ENCODE measurements at regions of chr1 and their contacts with region 1.

Region 1: DNA sequence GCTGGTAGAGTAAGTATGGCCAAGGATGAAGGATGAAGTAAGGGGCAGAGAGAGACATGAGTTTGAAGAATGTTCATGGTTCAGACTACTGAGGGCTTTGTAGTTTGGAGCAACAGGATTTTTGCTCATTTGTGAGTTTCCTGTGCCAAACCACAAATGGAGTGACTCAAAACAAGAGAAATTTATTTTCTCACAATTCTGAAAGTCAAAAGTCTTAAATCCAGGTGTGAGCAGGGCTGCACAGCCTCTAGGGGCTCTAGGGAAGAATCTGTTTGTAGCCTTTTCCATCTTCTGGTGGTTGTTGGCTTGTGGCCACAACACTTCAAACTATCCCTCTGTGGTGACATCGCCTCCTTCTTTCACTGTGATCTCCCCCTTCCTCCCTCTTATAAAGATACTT is 58.9 kb downstream of the RHOU start:
- DNase-seq: peak; percentile 87
- H3K4me3 Mint-ChIP-seq: no peak overlapping the region
- H3K27ac Mint-ChIP-seq: no peak overlapping the region
- H3K4me1 Mint-ChIP-seq: peaks cover 28% of the 10 kb centered on the region
- H3K27me3 Mint-ChIP-seq: no peaks in the 10 kb centered on the region

Region 2: DNA sequence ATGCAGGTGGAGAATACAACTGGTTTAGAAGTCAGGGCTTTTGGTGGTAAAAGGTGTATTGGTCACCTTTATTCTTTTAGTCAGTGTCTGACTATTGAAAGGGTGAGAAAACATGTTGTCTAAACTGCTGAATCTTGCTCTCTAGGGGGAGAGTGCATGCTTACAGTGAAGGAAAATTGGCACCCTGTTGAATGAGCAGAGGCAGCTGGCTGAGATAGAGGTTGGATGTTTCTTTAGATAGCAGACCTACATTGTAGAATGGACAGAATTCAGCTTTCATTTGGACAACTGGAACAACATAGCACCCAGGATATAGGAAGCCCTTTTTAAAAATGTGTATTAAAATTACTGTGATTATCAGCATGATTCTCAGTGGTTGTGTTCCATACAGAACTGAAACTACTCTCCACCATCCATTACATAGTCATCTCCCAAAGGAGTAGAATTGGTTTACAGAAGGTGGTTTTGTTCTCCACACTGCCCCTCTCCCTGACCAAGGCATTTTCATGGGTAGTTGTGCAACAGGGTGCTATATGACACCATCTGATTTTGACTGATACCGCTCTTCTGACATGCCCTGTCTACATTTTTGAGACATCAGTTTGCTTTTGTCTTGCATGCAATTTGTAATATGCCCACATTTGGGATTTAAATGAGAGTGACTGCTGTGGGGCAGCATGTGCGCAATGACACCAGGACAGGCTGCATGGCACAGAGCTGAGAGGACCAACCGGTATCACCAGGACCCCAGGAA is 42.6 kb before region 1 on chr1:
- intact Hi-C with region 1: loop called (anchors 1 kb)
- DNase-seq: no peak
- H3K4me3 Mint-ChIP-seq: no peak overlapping the region
- H3K27ac Mint-ChIP-seq: no peak overlapping the region
- H3K4me1 Mint-ChIP-seq: peaks cover 26% of the 10 kb centered on the region
- H3K27me3 Mint-ChIP-seq: peaks cover 47% of the 10 kb centered on the region

Region 3: DNA sequence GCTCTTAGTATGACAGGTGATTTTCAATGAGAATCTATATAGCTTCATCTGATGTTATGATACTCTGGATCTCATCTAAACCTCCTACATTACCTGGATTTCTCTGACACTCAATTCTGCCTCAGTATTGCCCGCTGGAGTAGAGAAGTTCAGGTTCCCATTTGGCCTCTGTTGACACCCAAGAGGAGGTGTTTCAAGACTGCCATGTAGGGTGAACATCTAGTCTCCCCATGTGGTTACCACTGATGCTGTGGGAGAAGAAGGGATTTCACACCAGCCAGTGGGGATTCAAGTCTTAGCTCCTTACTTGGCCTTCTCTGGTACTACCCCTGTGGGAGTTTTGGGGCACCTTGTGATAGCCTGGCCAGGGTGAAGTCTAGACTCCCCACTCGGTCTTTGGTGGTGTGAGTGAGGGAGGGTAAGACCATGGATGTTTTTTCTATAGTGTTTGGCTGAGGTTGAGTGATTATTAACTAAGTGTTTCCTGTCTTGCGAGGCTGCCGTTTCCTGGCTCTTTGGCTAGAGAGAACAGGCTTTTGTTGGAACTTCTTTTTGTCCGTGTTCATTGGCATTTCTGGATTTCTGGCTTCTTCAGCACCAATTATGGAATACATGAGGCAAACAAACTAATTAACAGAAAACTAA is 31.8 kb after region 1 on chr1:
- intact Hi-C with region 1: loop called (anchors 1 kb)
- DNase-seq: peak; percentile 62
- H3K4me3 Mint-ChIP-seq: peak overlapping the region; percentile 5
- H3K27ac Mint-ChIP-seq: no peak overlapping the region
- H3K4me1 Mint-ChIP-seq: peaks cover 35% of the 10 kb centered on the region
- H3K27me3 Mint-ChIP-seq: peaks cover 10% of the 10 kb centered on the region

Region 4: DNA sequence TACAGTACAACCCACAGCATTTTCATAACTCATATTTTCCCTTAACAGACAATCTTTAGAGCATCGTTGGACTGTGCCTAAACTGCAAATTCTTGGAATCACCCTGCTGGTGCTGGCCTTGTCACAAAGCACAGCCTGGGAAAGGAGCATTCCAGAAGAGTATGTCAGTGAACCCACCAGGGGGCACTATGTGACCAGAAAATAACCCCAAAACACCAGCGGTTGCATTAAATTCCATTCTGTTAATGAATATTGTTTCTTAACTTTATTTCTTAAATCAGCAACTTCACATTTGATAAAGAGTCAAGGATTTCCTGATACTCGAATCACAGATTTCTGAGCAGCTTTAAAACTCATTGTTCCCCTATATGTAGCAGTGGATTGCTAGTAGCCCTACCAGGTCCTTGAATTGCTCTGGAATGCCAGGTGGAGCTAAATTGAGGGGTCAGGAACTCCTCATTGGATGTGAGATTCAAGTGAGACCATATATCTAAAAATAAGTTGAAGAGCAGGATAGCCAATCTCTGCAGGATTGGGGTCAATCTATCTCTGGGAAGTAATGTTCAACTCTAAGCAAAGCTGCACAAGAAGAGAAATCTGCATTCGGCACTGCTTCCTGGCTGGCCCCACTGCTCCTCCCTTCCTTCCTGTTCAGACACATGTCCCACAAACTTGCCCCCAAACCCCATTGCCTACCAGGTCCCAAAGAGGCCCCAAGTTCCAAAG is 464.0 kb after region 1 on chr1:
- intact Hi-C with region 1: loop called (anchors 1 kb)
- DNase-seq: peak; percentile 89
- H3K4me3 Mint-ChIP-seq: no peak overlapping the region
- H3K27ac Mint-ChIP-seq: peak overlapping the region; percentile 24
- H3K4me1 Mint-ChIP-seq: peaks cover 27% of the 10 kb centered on the region
- H3K27me3 Mint-ChIP-seq: peaks cover 9% of the 10 kb centered on the region

Region 5: GRCh38 chr1:229440851-229441537 is 646.8 kb after region 1 on chr1:
- intact Hi-C with region 1: loop called (anchors 1 kb)
- DNase-seq: peak; percentile 77
- H3K4me3 Mint-ChIP-seq: peak overlapping the region; percentile 52
- H3K27ac Mint-ChIP-seq: peak overlapping the region; percentile 81
- H3K4me1 Mint-ChIP-seq: peaks cover 24% of the 10 kb centered on the region
- H3K27me3 Mint-ChIP-seq: peaks cover 17% of the 10 kb centered on the region

Measured in activated CD4-positive, alpha-beta T cell treated with anti-CD3 and anti-CD28 coated beads, Interleukin-2, amount 10 ng/mL, durations not matched to agents 24 days and 14 days (primary cell).